Right ventricle myocardium superior (tissue), 1 donor: ENCODE measurements at regions of chr16 and their contacts with region 1.

Region 1: DNA sequence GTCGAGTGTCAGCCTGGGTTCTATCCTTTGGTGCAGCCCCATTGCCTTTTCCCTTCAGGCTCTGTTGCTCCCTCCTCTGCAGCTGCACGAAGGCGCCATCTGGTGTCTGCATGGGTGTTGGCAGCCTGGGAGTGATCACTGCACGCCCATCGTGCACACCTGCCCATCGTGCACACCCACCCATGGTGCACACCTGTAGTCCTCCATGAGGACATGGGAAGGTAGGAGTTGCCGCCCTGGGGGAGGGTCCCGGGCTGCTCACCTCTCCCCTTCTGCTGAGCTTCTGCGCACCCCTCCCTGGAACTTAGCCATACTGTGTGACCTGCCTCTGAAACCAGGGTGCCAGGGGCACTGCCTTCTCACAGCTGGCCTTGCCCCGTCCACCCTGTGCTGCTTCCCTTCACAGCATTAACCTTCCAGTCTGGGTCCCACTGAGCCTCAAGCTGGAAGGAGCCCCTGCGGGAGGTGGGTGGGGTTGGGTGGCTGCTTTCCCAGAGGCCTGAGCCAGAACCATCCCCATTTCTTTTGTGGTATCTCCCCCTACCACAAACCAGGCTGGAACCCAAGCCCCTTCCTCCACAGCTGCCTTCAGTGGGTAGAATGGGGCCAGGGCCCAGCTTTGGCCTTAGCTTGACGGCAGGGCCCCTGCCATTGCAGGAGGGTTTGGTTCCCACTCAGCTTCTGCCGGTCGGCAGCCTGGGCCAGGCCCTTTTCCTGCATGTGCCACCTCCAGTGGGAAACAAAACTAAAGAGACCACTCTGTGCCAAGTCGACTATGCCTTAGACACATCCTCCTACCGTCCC is 2.9 kb downstream of the CTRL start:
- DNase-seq: peak; percentile 81
- ATAC-seq: peak; percentile 76

Region 2: DNA sequence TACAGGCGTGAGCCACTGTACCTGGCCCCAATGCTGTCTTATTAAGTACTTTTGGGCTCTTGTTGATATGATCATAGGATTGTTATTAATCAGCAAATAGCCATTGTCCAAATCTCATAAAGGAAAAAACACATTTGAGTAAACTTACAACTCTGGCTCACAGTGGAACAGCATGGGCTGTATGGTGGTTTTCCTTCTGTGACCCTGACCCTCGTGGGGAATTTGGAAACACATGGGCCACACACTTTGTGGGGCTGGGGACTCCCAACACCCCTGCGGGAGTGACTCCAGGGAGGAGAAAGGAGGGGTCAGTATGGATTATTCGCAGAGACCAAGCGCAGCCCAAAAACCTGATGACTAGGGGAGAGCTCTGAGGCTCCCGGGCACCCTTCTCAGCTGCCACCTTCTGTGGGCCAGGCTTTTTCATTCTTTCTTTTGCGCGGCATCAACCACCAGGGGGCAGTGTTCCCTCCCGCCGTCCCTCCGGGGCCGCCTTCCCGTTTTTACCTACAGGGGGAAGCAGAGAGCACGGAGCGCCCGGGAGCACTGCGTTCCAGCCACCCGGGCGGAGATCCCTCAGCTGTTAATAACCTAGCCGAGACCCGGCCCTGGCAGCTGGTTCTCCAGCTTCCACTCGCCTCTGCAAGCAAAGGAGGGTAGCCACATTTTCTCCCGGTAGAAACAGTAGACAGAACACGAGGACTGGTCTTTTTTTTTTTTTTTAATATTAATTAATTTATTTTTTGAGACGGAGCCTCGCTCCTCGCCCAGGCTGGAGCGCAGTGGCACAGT is 112.3 kb before region 1 on chr16:
- intact Hi-C with region 1: loop called (anchors 5 kb)
- DNase-seq: peak; percentile 92
- ATAC-seq: peak; percentile 98

Region 3: GRCh38 chr16:67884684-67885083 is 44.1 kb before region 1 on chr16 and contains the start of gene NRN1L:
- intact Hi-C with region 1: loop called (anchors 5 kb)
- DNase-seq: peak; percentile 93
- ATAC-seq: peak; percentile 82
- total RNA-seq, gene NRN1L: not detected